MCF 10A (cell line): ENCODE measurements at regions of chr3 and their contacts with region 1.

Region 1: DNA sequence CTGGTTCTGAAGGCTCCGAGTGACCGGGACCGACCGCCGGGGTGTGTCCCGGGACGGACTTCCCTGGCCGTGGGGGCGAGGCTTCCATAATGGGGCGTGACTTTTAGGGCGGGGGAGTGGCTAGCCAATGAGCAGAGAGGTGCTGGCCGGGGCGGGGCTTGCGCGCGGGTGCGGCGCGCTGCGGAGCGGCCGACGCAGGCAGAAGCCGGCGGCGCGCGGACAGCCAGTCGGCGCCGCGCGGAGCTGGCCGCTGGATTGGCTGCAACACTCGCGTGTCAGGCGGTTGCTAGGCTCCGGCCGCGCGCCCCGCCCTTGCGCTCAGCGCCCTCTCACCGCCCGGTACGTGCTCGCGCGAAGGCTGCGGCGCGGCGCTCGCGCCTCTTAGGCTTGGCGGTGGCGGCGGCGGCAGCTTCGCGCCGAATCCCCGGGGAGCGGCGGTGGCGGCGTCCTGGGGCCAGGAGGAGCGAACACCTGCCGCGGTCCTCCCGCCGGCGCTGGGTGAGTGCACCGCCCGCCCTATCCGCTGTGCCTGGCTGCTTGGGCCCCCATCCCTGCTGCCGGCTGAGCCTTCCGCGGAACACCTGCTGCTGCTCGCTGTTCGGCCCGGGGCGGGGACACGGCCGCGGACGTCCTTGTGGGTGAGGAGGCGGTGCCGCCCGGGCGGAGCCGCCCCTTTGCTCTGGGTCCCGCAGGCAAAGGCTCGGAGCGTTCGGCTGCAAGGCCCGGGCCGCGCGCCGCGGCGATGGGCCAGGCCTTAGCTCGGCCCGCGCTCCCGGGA is at the start of gene DAG1:
- DNase-seq: peak; percentile 96
- H3K4me3 Mint-ChIP-seq: peak within 1 kb of the TSS; percentile 89
- H3K27ac Mint-ChIP-seq: peak within 1 kb of the TSS; percentile 88
- H3K4me1 Mint-ChIP-seq: peaks cover 19% of the 10 kb centered on the region
- H3K27me3 Mint-ChIP-seq: no peaks in the 10 kb centered on the region
- CTCF ChIP-seq: no peak
- total RNA-seq, gene DAG1: 40.3 and 49.9 TPM in 2 replicates

Region 2: GRCh38 chr3:49120438-49121131 is 349.5 kb before region 1 on chr3 and contains the start of gene USP19:
- CTCF ChIA-PET with region 1: no interaction called
- POLR2A ChIA-PET with region 1: interaction called, 15 read pairs
- intact Hi-C with region 1: no loop called
- DNase-seq: peak; percentile 92
- H3K4me3 Mint-ChIP-seq: peak within 1 kb of the TSS; percentile 75
- H3K27ac Mint-ChIP-seq: peak within 1 kb of the TSS; percentile 79
- H3K4me1 Mint-ChIP-seq: peaks cover 6% of the 10 kb centered on the region
- H3K27me3 Mint-ChIP-seq: no peaks in the 10 kb centered on the region
- CTCF ChIP-seq: no peak
- total RNA-seq, gene USP19: 39.3 and 51.4 TPM in 2 replicates

Region 3: GRCh38 chr3:49351521-49352011 is 118.6 kb before region 1 on chr3:
- CTCF ChIA-PET with region 1: no interaction called
- POLR2A ChIA-PET with region 1: interaction called, 11 read pairs
- intact Hi-C with region 1: no loop called
- DNase-seq: peak; percentile 76
- H3K4me3 Mint-ChIP-seq: peak overlapping the region; percentile 45
- H3K27ac Mint-ChIP-seq: peak overlapping the region; percentile 82
- H3K4me1 Mint-ChIP-seq: peaks cover 40% of the 10 kb centered on the region
- H3K27me3 Mint-ChIP-seq: no peaks in the 10 kb centered on the region
- CTCF ChIP-seq: no peak

Region 4: DNA sequence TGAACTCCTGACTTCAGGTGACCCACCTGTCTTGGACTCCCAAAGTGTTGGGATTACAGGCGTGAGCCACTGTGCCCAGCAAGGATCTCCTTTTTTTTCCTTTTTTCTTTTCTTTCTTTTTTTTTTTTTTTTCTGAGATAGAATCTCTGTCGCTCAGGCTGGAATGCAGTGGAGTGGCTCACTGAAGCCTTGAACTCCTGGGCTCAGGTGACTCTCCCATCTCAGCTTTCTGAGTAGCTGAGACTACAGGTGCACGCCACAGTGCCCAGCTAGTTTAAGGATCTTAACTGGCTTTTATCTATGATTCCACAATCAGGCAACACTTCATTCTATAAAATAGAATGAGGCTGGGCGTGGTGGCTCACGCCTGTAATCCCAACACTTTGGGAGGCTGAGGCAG is 24.7 kb before region 1 on chr3:
- CTCF ChIA-PET with region 1: interaction called, 5 read pairs
- POLR2A ChIA-PET with region 1: interaction called, 18 read pairs
- intact Hi-C with region 1: no loop called
- DNase-seq: no peak
- H3K4me3 Mint-ChIP-seq: no peak overlapping the region
- H3K27ac Mint-ChIP-seq: no peak overlapping the region
- H3K4me1 Mint-ChIP-seq: peaks cover 7% of the 10 kb centered on the region
- H3K27me3 Mint-ChIP-seq: no peaks in the 10 kb centered on the region
- CTCF ChIP-seq: no peak

Region 5: DNA sequence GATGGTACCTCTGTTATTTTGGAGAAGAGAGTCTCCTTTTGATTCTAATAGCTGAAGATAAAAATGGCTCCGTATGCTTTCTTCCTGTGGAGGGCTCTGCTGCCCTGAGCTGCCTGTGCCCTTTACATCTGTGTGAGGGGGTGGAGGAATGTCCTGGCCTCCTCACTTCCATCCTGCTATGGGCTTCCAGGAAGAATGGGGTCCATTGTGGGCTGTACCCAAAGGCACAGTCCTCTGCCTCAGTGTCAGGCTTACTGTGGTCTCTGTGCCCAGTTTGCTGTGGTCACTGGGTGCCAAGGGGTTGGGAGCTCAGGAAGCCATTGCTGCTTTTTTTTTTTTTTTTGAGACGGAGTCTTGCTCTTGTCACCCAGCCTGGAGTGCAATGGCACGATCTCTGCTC is 14.3 kb after region 1 on chr3:
- CTCF ChIA-PET with region 1: interaction called, 3 read pairs
- POLR2A ChIA-PET with region 1: interaction called, 37 read pairs
- intact Hi-C with region 1: no loop called
- DNase-seq: no peak
- H3K4me3 Mint-ChIP-seq: no peak overlapping the region
- H3K27ac Mint-ChIP-seq: no peak overlapping the region
- H3K4me1 Mint-ChIP-seq: peaks cover 4% of the 10 kb centered on the region
- H3K27me3 Mint-ChIP-seq: no peaks in the 10 kb centered on the region
- CTCF ChIP-seq: no peak

Region 6: GRCh38 chr3:49500732-49501609 is 30.8 kb after region 1 on chr3:
- CTCF ChIA-PET with region 1: no interaction called
- POLR2A ChIA-PET with region 1: interaction called, 83 read pairs
- intact Hi-C with region 1: loop called (anchors 2 kb)
- DNase-seq: peak; percentile 96
- H3K4me3 Mint-ChIP-seq: peak overlapping the region; percentile 42
- H3K27ac Mint-ChIP-seq: peak overlapping the region; percentile 77
- H3K4me1 Mint-ChIP-seq: peaks cover 34% of the 10 kb centered on the region
- H3K27me3 Mint-ChIP-seq: no peaks in the 10 kb centered on the region
- CTCF ChIP-seq: no peak

Region 7: GRCh38 chr3:49656541-49657112 is 186.5 kb after region 1 on chr3:
- CTCF ChIA-PET with region 1: no interaction called
- POLR2A ChIA-PET with region 1: no interaction called
- intact Hi-C with region 1: no loop called
- DNase-seq: no peak
- H3K4me3 Mint-ChIP-seq: no peak overlapping the region
- H3K27ac Mint-ChIP-seq: no peak overlapping the region
- H3K4me1 Mint-ChIP-seq: peaks cover 6% of the 10 kb centered on the region
- H3K27me3 Mint-ChIP-seq: no peaks in the 10 kb centered on the region
- CTCF ChIP-seq: no peak